Caco-2 (cell line): ENCODE measurements at regions of chr19 and their contacts with region 1.

Region 1: GRCh38 chr19:40090241-40091204 is at the start of gene ZNF780A:
- DNase-seq: peak; percentile 87 to 88
- H3K4me3 ChIP-seq: peak within 1 kb of the TSS; percentile 74
- H3K4me3 Mint-ChIP-seq: peak within 1 kb of the TSS; percentile 100
- H3K27ac Mint-ChIP-seq: peak within 1 kb of the TSS; percentile 99
- H3K4me1 ChIP-seq: peaks cover 9% of the 10 kb centered on the region
- H3K4me1 Mint-ChIP-seq: peaks cover 16% of the 10 kb centered on the region
- H3K27me3 ChIP-seq: no peaks in the 10 kb centered on the region
- H3K27me3 Mint-ChIP-seq: peaks cover 3% of the 10 kb centered on the region
- CTCF ChIP-seq: no peak
- total RNA-seq, gene ZNF780A: 21.7 and 22.9 TPM in 2 replicates

Region 2: GRCh38 chr19:39996811-39997594 is 93.5 kb before region 1 on chr19 and contains the start of gene ZNF546:
- CTCF ChIA-PET with region 1: no interaction called
- POLR2A ChIA-PET with region 1: no interaction called
- intact Hi-C with region 1: loop called (anchors 2 kb)
- DNase-seq: peak; percentile 85 to 86
- H3K4me3 ChIP-seq: peak within 1 kb of the TSS; percentile 81
- H3K4me3 Mint-ChIP-seq: peak within 1 kb of the TSS; percentile 85
- H3K27ac Mint-ChIP-seq: peak within 1 kb of the TSS; percentile 85
- H3K4me1 ChIP-seq: no peaks in the 10 kb centered on the region; the same call in 1 of the 2 replicates
- H3K4me1 Mint-ChIP-seq: no peaks in the 10 kb centered on the region
- H3K27me3 ChIP-seq: no peaks in the 10 kb centered on the region
- H3K27me3 Mint-ChIP-seq: no peaks in the 10 kb centered on the region
- CTCF ChIP-seq: peak in 1 of 2 experiments; percentile 4
- total RNA-seq, gene ZNF546: 0.98 and 1.0 TPM in 2 replicates